Endothelial cell of umbilical vein (primary cell): ENCODE measurements at regions of chr6 and their contacts with region 1.

Region 1: GRCh38 chr6:35731736-35732532 is 4.9 kb upstream of the ARMC12 start:
- DNase-seq: peak; percentile 87
- H3K4me3 ChIP-seq: peak overlapping the region; percentile 51 to 73 (median 61)
- H3K27ac ChIP-seq: peak overlapping the region; percentile 88
- H3K4me1 ChIP-seq: peaks cover 34% of the 10 kb centered on the region
- H3K27me3 ChIP-seq: no peaks in the 10 kb centered on the region
- CTCF ChIP-seq: peak; percentile 5 to 28
- POLR2A ChIP-seq: peak; percentile 75

Region 2: GRCh38 chr6:35552285-35552917 is 179.5 kb before region 1 on chr6:
- CTCF ChIA-PET with region 1: interaction called, 19 read pairs
- POLR2A ChIA-PET with region 1: no interaction called
- dilution Hi-C with region 1: no loop called
- intact Hi-C with region 1: no loop called
- DNase-seq: peak; percentile 44
- H3K4me3 ChIP-seq: no peak overlapping the region
- H3K27ac ChIP-seq: no peak overlapping the region
- H3K4me1 ChIP-seq: no peaks in the 10 kb centered on the region
- H3K27me3 ChIP-seq: peaks cover 4 to 7% of the 10 kb centered on the region in 2 experiments
- CTCF ChIP-seq: peak; percentile 80 to 90
- POLR2A ChIP-seq: no peak

Region 3: GRCh38 chr6:35590622-35591066 is 141.3 kb before region 1 on chr6:
- CTCF ChIA-PET with region 1: interaction called, 89 read pairs
- POLR2A ChIA-PET with region 1: no interaction called
- dilution Hi-C with region 1: no loop called
- intact Hi-C with region 1: no loop called
- DNase-seq: peak; percentile 38
- H3K4me3 ChIP-seq: no peak overlapping the region
- H3K27ac ChIP-seq: no peak overlapping the region
- H3K4me1 ChIP-seq: no peaks in the 10 kb centered on the region
- H3K27me3 ChIP-seq: no peaks in the 10 kb centered on the region
- CTCF ChIP-seq: no peak
- POLR2A ChIP-seq: no peak

Region 4: GRCh38 chr6:35634316-35634715 is 97.6 kb before region 1 on chr6:
- CTCF ChIA-PET with region 1: interaction called, 17 read pairs
- POLR2A ChIA-PET with region 1: no interaction called
- dilution Hi-C with region 1: no loop called
- intact Hi-C with region 1: no loop called
- DNase-seq: peak; percentile 50
- H3K4me3 ChIP-seq: no peak overlapping the region
- H3K27ac ChIP-seq: no peak overlapping the region
- H3K4me1 ChIP-seq: no peaks in the 10 kb centered on the region
- H3K27me3 ChIP-seq: no peaks in the 10 kb centered on the region
- CTCF ChIP-seq: no peak
- POLR2A ChIP-seq: no peak

Region 5: GRCh38 chr6:35669451-35670045 is 62.4 kb before region 1 on chr6:
- CTCF ChIA-PET with region 1: interaction called, 22 read pairs
- POLR2A ChIA-PET with region 1: no interaction called
- dilution Hi-C with region 1: no loop called
- intact Hi-C with region 1: loop called (anchors 1 kb)
- DNase-seq: peak; percentile 94
- H3K4me3 ChIP-seq: peak overlapping the region in 2 of 3 experiments; percentile 2 to 59
- H3K27ac ChIP-seq: peak overlapping the region; percentile 95
- H3K4me1 ChIP-seq: peaks cover 51% of the 10 kb centered on the region
- H3K27me3 ChIP-seq: no peaks in the 10 kb centered on the region
- CTCF ChIP-seq: no peak
- POLR2A ChIP-seq: no peak

Region 6: DNA sequence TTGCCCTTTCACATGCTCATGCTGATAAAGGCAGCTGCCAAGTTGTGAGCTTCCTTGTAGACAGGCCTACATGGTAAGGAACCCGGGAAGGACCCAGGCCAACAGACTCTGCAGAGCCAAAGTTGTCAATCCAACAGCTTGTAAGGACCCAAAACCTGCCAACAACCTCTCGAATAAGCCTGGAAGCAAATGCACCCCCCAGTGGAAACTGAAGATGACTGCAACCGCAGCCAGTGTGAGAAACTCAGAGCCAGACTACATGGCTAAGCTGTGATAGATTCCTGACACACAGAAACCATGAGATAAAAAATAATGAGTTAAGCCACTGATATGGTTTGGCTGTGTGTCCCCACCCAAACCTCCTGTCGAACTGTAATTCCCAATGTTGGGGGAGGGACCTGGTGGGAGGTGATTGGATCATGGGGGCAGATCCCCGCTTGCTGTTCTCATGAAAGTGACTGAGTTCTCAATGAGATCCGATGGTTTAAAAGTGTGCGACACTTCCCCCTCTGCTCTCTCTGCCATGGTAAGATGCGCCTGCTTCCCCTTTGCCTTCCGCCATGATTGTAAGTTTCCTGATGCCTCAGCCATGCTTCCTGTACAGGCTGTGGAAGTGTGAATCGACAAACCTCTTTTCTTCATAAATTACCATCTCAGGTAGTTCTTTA is 25.7 kb after region 1 on chr6:
- CTCF ChIA-PET with region 1: interaction called, 19 read pairs
- POLR2A ChIA-PET with region 1: no interaction called
- dilution Hi-C with region 1: no loop called
- intact Hi-C with region 1: no loop called
- DNase-seq: peak; percentile 32
- H3K4me3 ChIP-seq: no peak overlapping the region
- H3K27ac ChIP-seq: no peak overlapping the region
- H3K4me1 ChIP-seq: no peaks in the 10 kb centered on the region
- H3K27me3 ChIP-seq: peaks cover 0 to 10% of the 10 kb centered on the region in 2 experiments
- CTCF ChIP-seq: peak; percentile 20 to 55
- POLR2A ChIP-seq: no peak

Region 7: DNA sequence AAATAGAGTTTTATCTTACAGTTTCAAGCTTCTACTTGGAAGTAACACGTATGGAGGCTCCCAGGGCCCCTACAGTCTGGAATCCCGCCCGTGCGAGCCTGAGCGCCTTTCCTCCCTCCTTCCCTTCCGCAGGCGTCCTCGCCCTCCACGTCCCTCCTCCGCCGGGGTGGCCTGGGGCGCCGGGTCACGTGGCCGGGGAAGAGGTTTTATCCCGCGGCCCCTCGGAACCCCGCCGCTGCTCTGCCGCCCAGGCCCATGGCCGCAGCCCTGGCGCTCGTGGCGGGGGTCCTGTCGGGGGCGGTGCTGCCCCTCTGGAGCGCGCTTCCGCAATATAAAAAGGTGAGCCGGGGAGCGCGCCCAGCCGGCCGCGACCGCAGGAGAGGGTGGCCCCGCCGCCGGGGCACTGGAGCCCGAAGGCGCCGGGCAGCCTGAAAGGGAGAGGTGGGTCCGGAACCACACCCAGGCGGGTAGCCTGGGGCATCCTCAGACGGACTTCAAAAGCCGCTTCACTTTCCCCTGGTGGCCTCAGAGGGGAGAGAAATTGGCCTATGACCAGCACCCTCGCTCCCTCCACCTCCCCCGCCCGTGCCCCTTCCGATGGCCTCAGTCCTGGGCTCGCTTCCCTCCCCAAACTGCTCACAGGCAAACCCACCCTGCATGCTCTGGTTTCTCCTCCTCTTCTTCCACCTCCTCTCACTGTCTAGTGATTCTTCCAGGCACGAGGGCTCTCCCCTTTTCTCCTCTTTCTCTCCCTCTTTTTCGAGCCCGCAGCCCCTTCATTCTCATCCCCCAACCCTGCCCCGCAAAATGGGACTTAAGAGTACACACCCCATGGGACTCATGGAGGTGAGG is 44.7 kb after region 1 on chr6 and contains the start of gene CLPSL2:
- CTCF ChIA-PET with region 1: no interaction called
- POLR2A ChIA-PET with region 1: no interaction called
- dilution Hi-C with region 1: no loop called
- intact Hi-C with region 1: no loop called
- DNase-seq: no peak
- H3K4me3 ChIP-seq: peak within 1 kb of the TSS in 2 of 3 experiments; percentile 44 to 47
- H3K27ac ChIP-seq: no peak within 1 kb of the TSS
- H3K4me1 ChIP-seq: peaks cover 3% of the 10 kb centered on the region
- H3K27me3 ChIP-seq: peaks cover 0 to 6% of the 10 kb centered on the region in 2 experiments
- CTCF ChIP-seq: no peak
- POLR2A ChIP-seq: no peak
- total RNA-seq, gene CLPSL2: not detected in 2 replicates

Region 8: GRCh38 chr6:35931120-35931561 is 199.2 kb after region 1 on chr6:
- CTCF ChIA-PET with region 1: no interaction called
- POLR2A ChIA-PET with region 1: no interaction called
- dilution Hi-C with region 1: no loop called
- intact Hi-C with region 1: no loop called
- DNase-seq: no peak
- H3K4me3 ChIP-seq: no peak overlapping the region
- H3K27ac ChIP-seq: no peak overlapping the region
- H3K4me1 ChIP-seq: no peaks in the 10 kb centered on the region
- H3K27me3 ChIP-seq: no peaks in the 10 kb centered on the region
- CTCF ChIP-seq: no peak
- POLR2A ChIP-seq: no peak